Calu3 (cell line): ENCODE measurements at regions of chr5 and their contacts with region 1.

Region 1: DNA sequence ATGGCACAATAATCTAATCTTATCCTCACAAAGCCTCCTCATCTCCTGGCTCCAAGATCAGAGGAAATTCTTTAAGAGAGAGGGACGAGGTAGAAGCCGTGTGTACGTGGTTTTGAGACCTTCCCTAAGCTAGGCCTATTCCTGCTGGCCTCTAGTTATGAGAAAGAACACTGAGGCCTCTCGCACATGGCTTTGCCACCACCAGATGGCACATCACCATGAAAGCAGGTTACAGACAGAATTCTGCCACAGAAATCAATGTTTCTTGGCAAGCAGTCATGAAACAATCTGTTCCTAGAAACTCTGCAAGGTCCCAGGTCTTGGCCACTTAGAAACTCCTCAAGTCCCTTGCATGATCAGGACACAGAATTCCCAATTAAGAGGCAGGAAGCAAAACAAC is 268.2 kb upstream of the TAS2R1 start:
- DNase-seq: peak; percentile 68
- H3K4me3 Mint-ChIP-seq: no peak overlapping the region
- H3K27ac Mint-ChIP-seq: no peak overlapping the region
- H3K4me1 Mint-ChIP-seq: peaks cover 7% of the 10 kb centered on the region
- H3K27me3 Mint-ChIP-seq: peaks cover 5% of the 10 kb centered on the region
- CTCF ChIP-seq: peak; percentile 60

Region 2: DNA sequence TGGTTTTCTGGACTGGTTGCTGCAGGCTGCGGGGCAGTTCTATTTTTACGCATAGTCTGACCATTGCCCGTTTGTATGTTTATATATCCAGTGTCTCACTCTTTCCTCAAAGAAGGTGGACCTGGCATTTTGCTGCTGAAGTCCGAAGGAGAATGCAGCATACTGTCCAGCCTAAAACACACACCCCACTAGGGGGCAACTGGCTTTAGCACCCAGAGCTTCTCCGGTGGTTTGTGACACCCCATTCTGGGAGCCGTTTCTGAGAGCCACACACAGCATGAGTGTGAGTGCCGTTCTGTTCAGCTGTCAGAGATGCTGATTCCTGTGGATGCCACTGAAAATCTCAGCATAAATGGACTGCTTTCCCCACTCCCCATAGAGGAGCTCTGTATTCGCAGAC is 22.4 kb after region 1 on chr5:
- CTCF ChIA-PET with region 1: no interaction called
- intact Hi-C with region 1: no loop called
- DNase-seq: no peak
- H3K4me3 Mint-ChIP-seq: no peak overlapping the region
- H3K27ac Mint-ChIP-seq: no peak overlapping the region
- H3K4me1 Mint-ChIP-seq: peaks cover 19% of the 10 kb centered on the region
- H3K27me3 Mint-ChIP-seq: no peaks in the 10 kb centered on the region
- CTCF ChIP-seq: no peak

Region 3: DNA sequence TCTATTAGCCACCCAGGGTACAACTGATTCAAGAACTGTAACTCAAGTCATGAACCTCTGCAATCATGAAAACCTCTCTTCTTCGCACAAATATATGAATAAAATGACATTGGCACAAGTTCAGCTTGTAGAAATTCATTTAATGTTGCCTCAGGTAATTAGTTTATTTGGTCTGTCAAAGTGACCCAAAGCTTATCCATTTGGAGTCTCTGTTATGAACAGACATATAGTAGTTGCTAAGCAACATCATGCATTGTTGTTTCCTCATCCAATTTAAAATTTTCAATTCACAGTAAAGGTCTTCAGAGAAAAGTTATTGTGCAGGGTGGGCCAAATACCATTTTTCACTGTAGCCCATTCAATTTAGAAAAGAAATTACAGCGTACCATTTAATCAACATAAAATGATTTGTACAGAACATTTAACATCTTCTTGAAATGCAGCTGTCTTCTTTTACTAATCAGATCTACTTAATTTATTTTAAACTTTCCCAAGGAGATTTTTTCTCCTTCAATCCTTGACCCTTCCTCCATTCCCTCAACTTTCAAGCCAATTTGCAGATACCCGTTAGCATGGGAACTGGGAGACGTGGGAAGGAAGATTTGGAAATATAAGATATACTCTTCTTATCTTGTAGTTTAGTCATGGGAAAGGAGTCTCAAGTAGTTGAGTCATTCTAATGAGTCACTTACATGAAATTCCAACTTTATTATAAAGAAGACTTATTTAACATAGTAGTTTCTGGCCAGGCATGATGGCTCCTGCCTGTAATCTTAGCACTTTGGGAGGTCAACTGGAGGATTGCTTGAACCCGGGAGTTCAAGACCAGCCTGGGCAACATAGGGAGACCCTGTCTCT is 120.1 kb after region 1 on chr5:
- CTCF ChIA-PET with region 1: no interaction called
- intact Hi-C with region 1: loop called (anchors 1 kb)
- DNase-seq: no peak
- H3K4me3 Mint-ChIP-seq: no peak overlapping the region
- H3K27ac Mint-ChIP-seq: peak overlapping the region; percentile 88
- H3K4me1 Mint-ChIP-seq: peaks cover 47% of the 10 kb centered on the region
- H3K27me3 Mint-ChIP-seq: no peaks in the 10 kb centered on the region
- CTCF ChIP-seq: no peak

Region 4: GRCh38 chr5:10030210-10030831 is 132.0 kb after region 1 on chr5:
- CTCF ChIA-PET with region 1: interaction called, 17 read pairs
- intact Hi-C with region 1: loop called (anchors 1 kb)
- DNase-seq: peak; percentile 58
- H3K4me3 Mint-ChIP-seq: no peak overlapping the region
- H3K27ac Mint-ChIP-seq: no peak overlapping the region
- H3K4me1 Mint-ChIP-seq: no peaks in the 10 kb centered on the region
- H3K27me3 Mint-ChIP-seq: no peaks in the 10 kb centered on the region
- CTCF ChIP-seq: peak; percentile 14

Region 5: GRCh38 chr5:10145923-10146401 is 247.6 kb after region 1 on chr5:
- CTCF ChIA-PET with region 1: no interaction called
- intact Hi-C with region 1: loop called (anchors 5 kb)
- DNase-seq: no peak
- H3K4me3 Mint-ChIP-seq: no peak overlapping the region
- H3K27ac Mint-ChIP-seq: no peak overlapping the region
- H3K4me1 Mint-ChIP-seq: no peaks in the 10 kb centered on the region
- H3K27me3 Mint-ChIP-seq: no peaks in the 10 kb centered on the region
- CTCF ChIP-seq: peak; percentile 37

Region 6: GRCh38 chr5:10233505-10233904 is 335.2 kb after region 1 on chr5:
- CTCF ChIA-PET with region 1: no interaction called
- intact Hi-C with region 1: loop called (anchors 1 kb)
- DNase-seq: peak; percentile 43
- H3K4me3 Mint-ChIP-seq: no peak overlapping the region
- H3K27ac Mint-ChIP-seq: no peak overlapping the region
- H3K4me1 Mint-ChIP-seq: no peaks in the 10 kb centered on the region
- H3K27me3 Mint-ChIP-seq: no peaks in the 10 kb centered on the region
- CTCF ChIP-seq: no peak